ENCODE measurements at regions of chr6 and their contacts with region 1.

Region 1: DNA sequence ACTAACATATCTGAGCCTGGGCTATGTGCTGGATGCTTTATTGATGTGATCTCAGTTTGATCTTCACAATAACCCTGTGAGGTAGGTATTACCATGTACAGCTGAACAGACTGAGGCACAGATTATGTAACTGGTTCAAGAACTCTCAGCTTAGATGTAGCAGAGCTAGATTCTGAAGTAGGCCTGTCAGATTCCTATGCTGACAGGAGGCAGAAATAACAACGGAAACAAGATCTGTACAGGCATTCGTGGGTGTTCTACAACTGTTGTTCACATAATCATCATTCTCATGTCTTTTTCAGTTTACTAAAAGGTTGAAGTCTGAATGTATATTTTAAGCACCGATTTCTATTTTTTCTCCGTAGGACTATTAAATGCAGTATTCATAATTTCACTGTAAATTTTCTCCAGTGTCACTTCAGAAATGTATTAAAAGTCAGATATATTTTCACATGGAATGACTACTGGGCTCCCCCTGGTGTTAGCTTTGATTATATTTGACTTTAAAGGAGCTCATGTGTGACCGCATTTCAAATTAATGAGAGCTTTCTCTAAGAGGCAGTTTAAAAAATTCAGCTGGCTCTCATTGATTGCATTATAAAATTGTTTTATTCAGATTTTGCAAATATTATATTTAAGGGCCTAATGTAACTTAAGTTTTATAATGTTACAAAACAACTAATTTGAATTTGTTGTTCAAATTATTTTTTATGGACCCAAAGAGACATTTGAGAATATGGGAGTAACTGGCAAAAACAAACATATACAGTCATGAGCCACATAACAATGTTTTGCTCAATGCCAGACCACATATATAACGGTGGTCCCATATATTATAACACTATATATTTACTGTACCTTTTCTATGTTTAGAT is 36.4 kb upstream of the SLC17A4 start:
- DNase-seq: peak; percentile 39
- ATAC-seq: no peak
- H3K4me3 ChIP-seq: no peak overlapping the region
- H3K27ac ChIP-seq: no peak overlapping the region
- H3K4me1 ChIP-seq: peaks cover 38% of the 10 kb centered on the region
- H3K27me3 ChIP-seq: no peaks in the 10 kb centered on the region
- CTCF ChIP-seq: peak; percentile 64
- EP300 ChIP-seq: no peak
- POLR2A ChIP-seq: no peak
- RAD21 ChIP-seq: peak; percentile 56; the same call in 1 of the 2 replicates

Region 2: GRCh38 chr6:25278914-25279747 is 439.0 kb before region 1 on chr6 and contains the start of gene CARMIL1:
- CTCF ChIA-PET with region 1: no interaction called
- POLR2A ChIA-PET with region 1: no interaction called
- in situ Hi-C with region 1: no loop called
- intact Hi-C with region 1: loop called (anchors 1 kb)
- DNase-seq: peak; percentile 54
- ATAC-seq: peak; percentile 92
- H3K4me3 ChIP-seq: peak within 1 kb of the TSS; percentile 67 to 81 (median 79)
- H3K27ac ChIP-seq: no peak within 1 kb of the TSS
- H3K4me1 ChIP-seq: peaks cover 35% of the 10 kb centered on the region
- H3K27me3 ChIP-seq: peaks cover 0 to 21% of the 10 kb centered on the region in 2 experiments; a peak in 3 of 5 replicates
- CTCF ChIP-seq: peak; percentile 86
- EP300 ChIP-seq: no peak
- POLR2A ChIP-seq: no peak
- RAD21 ChIP-seq: peak; percentile 91
- total RNA-seq, gene CARMIL1: 2.6 and 2.9 TPM in 2 replicates

Region 3: GRCh38 chr6:25601800-25602673 is 116.1 kb before region 1 on chr6:
- CTCF ChIA-PET with region 1: interaction called, 7 read pairs
- POLR2A ChIA-PET with region 1: no interaction called
- in situ Hi-C with region 1: no loop called
- intact Hi-C with region 1: loop called (anchors 1 kb)
- DNase-seq: peak; percentile 60
- ATAC-seq: no peak; the same call in 2 of the 3 replicates
- H3K4me3 ChIP-seq: no peak overlapping the region
- H3K27ac ChIP-seq: no peak overlapping the region
- H3K4me1 ChIP-seq: peaks cover 15% of the 10 kb centered on the region
- H3K27me3 ChIP-seq: no peaks in the 10 kb centered on the region
- CTCF ChIP-seq: peak; percentile 66
- EP300 ChIP-seq: no peak
- POLR2A ChIP-seq: no peak
- RAD21 ChIP-seq: peak; percentile 67; the same call in 1 of the 2 replicates

Region 4: GRCh38 chr6:25749837-25750236 is 31.7 kb after region 1 on chr6:
- CTCF ChIA-PET with region 1: no interaction called
- POLR2A ChIA-PET with region 1: no interaction called
- in situ Hi-C with region 1: no loop called
- intact Hi-C with region 1: loop called (anchors 2 kb)
- DNase-seq: no peak
- ATAC-seq: no peak
- H3K4me3 ChIP-seq: no peak overlapping the region
- H3K27ac ChIP-seq: no peak overlapping the region
- H3K4me1 ChIP-seq: peaks cover 74% of the 10 kb centered on the region
- H3K27me3 ChIP-seq: no peaks in the 10 kb centered on the region
- CTCF ChIP-seq: no peak
- EP300 ChIP-seq: no peak
- POLR2A ChIP-seq: no peak
- RAD21 ChIP-seq: no peak

Region 5: GRCh38 chr6:25889877-25890853 is 172.1 kb after region 1 on chr6:
- CTCF ChIA-PET with region 1: interaction called, 23 read pairs
- POLR2A ChIA-PET with region 1: no interaction called
- in situ Hi-C with region 1: no loop called
- intact Hi-C with region 1: loop called (anchors 1 kb)
- DNase-seq: peak; percentile 70
- ATAC-seq: peak; percentile 95
- H3K4me3 ChIP-seq: no peak overlapping the region
- H3K27ac ChIP-seq: no peak overlapping the region
- H3K4me1 ChIP-seq: peaks cover 14% of the 10 kb centered on the region
- H3K27me3 ChIP-seq: no peaks in the 10 kb centered on the region
- CTCF ChIP-seq: peak; percentile 91
- EP300 ChIP-seq: no peak
- POLR2A ChIP-seq: no peak
- RAD21 ChIP-seq: peak; percentile 90